HEK293T (cell line): ENCODE measurements at regions of chr14 and their contacts with region 1.

Region 1: DNA sequence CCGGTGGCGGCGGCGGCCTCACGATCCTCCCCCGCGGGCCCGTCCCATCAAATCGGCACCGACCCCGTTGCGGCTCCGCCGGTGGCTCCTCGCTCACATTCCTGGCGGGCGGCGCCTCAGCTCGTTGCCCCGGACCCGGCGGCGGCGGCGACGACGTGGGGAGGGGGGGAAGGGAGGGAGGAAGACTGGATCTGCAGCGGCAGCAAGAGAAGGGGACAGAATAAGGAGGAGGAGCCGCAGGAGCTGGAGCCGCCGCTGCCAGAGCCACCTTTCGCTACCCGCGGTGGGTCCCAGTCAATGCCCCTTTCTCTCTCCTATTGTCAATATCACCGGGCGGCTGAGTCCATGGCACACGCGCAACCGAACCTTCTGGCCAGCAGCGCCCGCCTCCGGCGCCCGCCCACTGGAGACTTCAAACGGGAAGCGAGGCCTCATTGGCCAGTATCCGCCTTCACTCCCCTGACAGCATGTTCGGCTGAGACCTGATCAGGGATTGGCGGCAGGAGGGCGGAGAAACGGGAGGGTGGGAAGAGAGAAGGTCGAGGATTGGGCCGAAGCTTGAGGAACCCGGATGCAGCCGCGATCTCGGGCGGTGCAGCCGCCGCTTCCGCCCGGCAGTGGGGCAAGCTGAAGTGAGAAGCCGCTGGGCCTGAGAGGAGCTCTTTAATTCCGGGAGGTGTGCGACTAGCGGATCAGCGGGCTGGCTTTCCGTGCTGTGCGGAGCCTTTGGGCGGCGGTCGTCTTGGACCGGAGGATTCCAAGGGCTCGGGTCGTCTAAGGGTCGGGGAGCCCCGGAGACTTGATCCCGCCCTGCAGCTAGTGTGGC is at the start of gene PPP2R5E:
- DNase-seq: peak; percentile 93

Region 2: GRCh38 chr14:63555572-63555971 is 12.4 kb after region 1 on chr14:
- CTCF ChIA-PET with region 1: no interaction called
- POLR2A ChIA-PET with region 1: interaction called, 18 read pairs
- DNase-seq: no peak

Region 3: GRCh38 chr14:63564318-63564717 is 21.1 kb after region 1 on chr14:
- CTCF ChIA-PET with region 1: no interaction called
- POLR2A ChIA-PET with region 1: interaction called, 10 read pairs
- DNase-seq: no peak

Region 4: DNA sequence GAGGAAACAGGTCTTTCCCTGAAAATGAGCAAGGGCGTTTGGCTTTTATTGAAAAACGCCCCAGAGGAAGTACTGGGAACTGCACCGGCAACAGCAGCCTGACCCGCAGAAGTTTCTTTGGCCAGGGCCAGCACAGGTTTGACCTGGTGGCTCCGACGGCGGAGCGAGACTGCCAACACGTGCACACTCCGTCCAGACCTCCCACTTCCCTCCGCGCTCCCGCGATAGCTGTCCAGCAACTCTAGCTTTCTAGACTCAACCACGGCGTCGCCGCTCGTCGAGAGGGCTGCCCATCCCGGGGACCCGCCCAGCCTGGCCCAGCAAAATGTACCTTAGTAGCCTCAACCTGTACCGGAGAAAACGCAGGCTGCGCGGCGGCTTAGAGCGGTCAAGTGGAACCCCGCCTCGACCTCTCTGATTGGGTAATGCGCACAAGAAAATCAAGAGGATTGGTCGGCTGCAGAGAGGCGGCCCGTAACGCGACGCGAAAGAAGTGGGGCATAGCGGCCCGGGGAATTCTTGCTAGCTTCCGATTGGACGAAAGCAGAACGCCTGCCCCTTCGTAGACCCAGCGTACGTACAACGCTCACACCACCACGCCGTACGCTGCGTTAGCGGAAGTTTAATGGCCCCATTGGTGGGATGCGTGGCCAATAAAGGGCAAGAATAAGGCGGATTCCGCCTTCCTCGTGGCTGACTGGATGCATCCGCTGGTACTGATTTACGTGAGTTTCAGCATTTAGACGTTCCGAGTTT is 98.4 kb after region 1 on chr14 and contains the start of gene WDR89:
- CTCF ChIA-PET with region 1: no interaction called
- POLR2A ChIA-PET with region 1: interaction called, 17 read pairs
- DNase-seq: peak; percentile 92

Region 5: GRCh38 chr14:63671987-63672386 is 128.8 kb after region 1 on chr14:
- CTCF ChIA-PET with region 1: no interaction called
- POLR2A ChIA-PET with region 1: no interaction called
- DNase-seq: no peak

Region 6: DNA sequence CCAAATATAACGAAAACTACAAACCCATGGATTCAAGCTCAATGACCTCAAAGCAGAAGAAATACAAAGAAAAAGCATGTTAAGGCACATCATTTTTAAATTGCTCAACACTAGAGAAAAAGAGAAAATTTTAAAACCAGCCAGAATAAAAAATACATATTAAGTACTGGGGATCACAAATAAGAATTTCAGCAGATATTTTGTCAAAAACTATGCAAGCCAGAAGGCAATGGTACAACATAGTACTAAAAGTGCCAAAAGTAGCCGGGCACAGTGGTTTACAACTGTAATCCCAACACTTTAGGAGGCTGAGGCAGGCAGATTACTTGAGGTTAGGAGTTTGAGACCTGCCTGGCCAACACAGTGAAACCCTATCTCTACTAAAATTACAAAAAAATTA is 174.5 kb after region 1 on chr14:
- CTCF ChIA-PET with region 1: no interaction called
- POLR2A ChIA-PET with region 1: no interaction called
- DNase-seq: no peak